BJ (cell line): ENCODE measurements at regions of chr16 and their contacts with region 1.

Region 1: DNA sequence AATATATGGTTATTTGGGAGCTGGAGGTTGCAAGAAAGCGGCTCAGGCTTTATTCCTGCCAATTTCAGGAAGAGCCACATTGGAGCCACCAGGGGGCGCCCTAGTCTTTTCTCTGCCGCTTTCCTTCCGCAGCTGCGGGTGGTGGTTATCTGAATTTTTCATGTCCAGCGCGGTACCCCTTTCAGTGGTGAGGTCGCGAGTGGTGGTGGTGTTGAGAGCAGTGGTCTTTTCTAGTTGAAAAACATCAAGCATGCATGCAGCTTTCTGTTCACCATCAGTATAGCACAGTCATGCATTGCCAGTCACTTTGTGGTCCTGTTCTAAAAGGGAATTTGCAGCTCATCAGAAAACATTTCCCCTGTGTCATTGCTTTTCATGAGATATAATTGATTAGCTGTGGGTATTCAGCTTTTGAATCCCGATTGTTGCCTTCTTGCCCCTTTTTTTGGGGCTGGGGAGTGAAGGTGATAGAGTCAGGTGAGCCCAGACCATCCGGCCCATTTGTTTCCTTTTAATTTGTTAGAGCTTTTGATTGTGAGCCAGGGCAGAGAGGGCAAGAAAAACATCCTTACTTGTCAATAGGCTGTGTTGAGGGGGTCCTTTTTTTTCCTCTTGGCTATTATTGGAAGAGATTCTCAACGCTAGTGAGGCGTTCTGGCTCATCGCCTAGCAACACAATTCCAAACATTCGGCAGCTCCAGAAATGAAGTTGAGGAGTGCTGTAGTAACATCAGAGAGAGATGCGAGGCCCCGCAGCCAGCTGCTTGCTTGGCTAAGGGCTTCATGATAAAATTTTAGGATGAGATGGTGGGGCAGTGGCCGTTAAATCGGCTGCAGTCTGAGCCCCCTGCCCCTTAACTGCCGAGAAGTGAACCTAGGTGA is 119.0 kb downstream of the SNX29 start:
- DNase-seq: no peak
- H3K4me3 ChIP-seq: no peak overlapping the region
- H3K27me3 ChIP-seq: no peaks in the 10 kb centered on the region
- CTCF ChIP-seq: peak; percentile 87

Region 2: DNA sequence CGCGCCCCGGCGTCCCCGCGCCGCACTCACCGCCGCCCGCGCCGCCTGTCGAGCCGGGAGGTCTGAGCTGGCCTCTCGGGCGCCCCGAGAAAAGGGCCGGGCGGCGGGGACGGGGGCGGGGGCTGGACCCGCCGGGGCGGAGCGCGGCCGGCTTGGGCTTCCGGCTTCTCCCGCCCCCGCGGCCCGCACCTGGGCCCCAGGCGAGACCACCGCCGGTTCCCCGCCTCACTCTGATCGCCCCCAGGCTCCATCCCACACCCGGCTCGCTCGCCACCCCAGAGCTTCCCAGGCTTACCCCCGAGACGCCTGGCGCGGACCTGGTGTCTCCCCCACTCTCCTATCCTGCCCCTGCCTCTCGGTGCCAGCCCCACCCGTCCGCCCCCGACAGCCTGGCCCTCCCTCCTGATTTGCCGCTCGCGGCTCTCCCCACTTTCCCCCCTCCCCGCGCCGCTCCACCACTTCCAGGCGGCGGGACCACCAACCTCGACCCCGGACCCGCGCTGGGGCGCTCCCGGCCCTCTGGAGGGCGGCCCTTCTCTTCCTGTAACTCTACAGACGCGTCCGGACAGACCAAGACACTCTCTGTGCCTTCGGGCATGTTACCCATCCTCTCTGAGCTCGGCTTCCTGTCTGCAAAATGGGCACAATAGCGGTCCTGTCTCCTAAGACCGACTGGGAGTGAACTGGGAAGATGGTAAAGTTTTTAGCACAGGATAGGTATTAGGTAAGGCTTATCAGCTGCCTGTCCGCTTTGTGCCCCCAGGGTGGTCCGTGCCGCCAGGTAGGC is 508.5 kb before region 1 on chr16 and contains the start of gene LITAF:
- CTCF ChIA-PET with region 1: no interaction called
- POLR2A ChIA-PET with region 1: no interaction called
- DNase-seq: no peak
- H3K4me3 ChIP-seq: peak within 1 kb of the TSS; percentile 84
- H3K27me3 ChIP-seq: no peaks in the 10 kb centered on the region
- CTCF ChIP-seq: no peak; the same call in 1 of the 2 replicates
- polyA plus RNA-seq, gene LITAF: 118 and 212 TPM in 2 replicates

Region 3: DNA sequence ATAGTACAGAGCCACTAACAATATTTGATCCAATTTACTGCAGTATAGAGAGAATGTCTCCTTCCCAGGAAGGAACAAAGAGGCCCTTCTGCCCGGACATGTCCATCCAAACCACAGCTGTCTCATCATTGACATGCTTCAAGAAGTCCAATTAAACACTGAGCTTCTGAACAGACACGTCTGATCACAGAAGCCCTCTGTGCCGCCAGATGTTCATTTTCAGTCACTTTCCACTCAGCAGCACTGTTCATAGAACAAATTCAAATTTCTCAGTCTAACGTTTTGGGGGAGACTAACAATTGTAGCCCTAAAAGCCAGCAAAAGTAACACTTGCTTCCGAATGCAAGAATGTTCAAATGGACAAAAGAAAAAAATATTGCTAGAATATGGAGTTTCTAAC is 313.7 kb before region 1 on chr16:
- CTCF ChIA-PET with region 1: no interaction called
- POLR2A ChIA-PET with region 1: no interaction called
- DNase-seq: no peak
- H3K4me3 ChIP-seq: no peak overlapping the region
- H3K27me3 ChIP-seq: no peaks in the 10 kb centered on the region
- CTCF ChIP-seq: no peak

Region 4: GRCh38 chr16:12057266-12057665 is 38.2 kb before region 1 on chr16:
- CTCF ChIA-PET with region 1: no interaction called
- POLR2A ChIA-PET with region 1: no interaction called
- DNase-seq: peak; percentile 52
- H3K4me3 ChIP-seq: no peak overlapping the region
- H3K27me3 ChIP-seq: no peaks in the 10 kb centered on the region
- CTCF ChIP-seq: peak; percentile 54

Region 5: DNA sequence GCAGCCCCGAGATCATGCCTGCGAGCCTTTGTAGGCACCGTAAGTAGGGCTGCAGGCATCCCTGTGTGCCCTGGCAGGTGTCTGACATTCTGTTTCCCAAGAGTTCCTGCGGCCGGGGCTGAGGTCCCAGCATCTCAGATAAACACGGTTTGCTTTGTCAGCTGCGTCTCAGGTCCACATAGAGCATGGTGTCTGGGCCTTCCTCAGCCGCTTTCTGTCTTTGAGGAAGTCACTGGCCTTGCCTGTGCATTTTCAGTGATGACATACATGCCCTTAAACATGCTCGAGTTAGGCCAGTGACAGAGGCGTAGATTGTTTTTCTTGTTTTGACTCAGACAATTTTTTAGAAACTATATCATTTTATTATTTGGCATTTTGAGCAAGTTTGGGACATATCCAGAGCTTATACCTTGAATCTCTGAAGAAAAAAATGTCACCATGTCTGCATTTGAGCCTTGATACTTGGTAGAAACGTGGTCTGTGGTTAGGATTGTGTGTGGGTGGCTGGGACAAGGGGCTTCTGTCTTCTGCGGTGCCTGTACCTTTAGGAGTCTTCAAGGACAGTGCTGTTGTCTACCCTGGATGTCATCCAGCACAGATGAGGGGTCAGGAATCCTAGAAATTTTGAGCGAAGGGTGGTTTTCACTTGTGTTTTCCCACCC is 13.2 kb before region 1 on chr16:
- CTCF ChIA-PET with region 1: interaction called, 18 read pairs
- POLR2A ChIA-PET with region 1: no interaction called
- DNase-seq: no peak
- H3K4me3 ChIP-seq: no peak overlapping the region
- H3K27me3 ChIP-seq: no peaks in the 10 kb centered on the region
- CTCF ChIP-seq: no peak

Region 6: GRCh38 chr16:12217341-12217740 is 121.8 kb after region 1 on chr16:
- CTCF ChIA-PET with region 1: interaction called, 10 read pairs
- POLR2A ChIA-PET with region 1: no interaction called
- DNase-seq: no peak
- H3K4me3 ChIP-seq: no peak overlapping the region
- H3K27me3 ChIP-seq: no peaks in the 10 kb centered on the region
- CTCF ChIP-seq: no peak

Region 7: DNA sequence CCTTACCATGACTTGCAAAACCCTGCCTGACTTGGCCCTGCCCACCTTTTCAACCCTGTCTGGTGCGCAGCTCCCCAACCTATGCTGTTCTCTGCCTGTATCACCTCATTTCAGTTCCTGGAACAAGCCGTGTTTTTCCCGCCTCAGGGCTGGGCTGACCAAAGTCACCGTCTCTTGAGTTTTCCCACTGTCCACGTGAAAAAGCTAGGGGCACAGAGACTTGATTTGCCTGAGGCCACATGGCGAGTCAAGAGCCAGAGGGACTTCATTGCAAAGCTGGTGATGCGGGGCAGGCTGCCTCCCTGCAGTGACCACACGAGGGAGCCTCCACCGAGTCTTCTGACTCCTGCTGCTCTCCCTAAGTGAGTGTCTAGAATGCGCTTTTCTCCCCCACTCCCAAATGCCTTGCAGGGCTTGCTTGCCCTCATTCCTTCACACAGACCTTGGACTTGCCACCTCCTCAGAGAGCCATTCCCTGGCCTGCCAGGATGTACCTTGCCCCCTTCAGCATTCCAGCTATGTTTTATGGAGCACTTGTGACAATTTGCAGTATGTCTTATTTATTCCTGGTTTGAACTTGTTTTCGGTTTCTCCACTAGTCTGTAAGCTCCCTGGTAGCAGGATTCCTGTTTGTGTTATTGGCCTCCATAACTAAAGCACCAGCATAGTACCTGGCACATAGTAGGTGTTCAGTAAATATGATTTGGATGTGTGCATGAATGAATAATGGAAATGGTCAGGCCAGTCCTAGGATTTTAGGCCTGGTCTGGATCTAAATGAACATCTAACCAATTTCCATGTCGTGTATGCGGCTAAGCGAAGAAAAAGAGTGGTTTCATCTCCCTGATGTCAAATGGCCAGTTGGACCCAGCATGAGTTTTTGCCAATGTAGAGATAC is 133.3 kb after region 1 on chr16:
- CTCF ChIA-PET with region 1: interaction called, 61 read pairs
- POLR2A ChIA-PET with region 1: no interaction called
- DNase-seq: peak; percentile 60
- H3K4me3 ChIP-seq: no peak overlapping the region
- H3K27me3 ChIP-seq: no peaks in the 10 kb centered on the region
- CTCF ChIP-seq: peak; percentile 90

Region 8: GRCh38 chr16:12276556-12276955 is 181.0 kb after region 1 on chr16:
- CTCF ChIA-PET with region 1: interaction called, 11 read pairs
- POLR2A ChIA-PET with region 1: no interaction called
- DNase-seq: no peak
- H3K4me3 ChIP-seq: no peak overlapping the region
- H3K27me3 ChIP-seq: no peaks in the 10 kb centered on the region
- CTCF ChIP-seq: no peak

Region 9: DNA sequence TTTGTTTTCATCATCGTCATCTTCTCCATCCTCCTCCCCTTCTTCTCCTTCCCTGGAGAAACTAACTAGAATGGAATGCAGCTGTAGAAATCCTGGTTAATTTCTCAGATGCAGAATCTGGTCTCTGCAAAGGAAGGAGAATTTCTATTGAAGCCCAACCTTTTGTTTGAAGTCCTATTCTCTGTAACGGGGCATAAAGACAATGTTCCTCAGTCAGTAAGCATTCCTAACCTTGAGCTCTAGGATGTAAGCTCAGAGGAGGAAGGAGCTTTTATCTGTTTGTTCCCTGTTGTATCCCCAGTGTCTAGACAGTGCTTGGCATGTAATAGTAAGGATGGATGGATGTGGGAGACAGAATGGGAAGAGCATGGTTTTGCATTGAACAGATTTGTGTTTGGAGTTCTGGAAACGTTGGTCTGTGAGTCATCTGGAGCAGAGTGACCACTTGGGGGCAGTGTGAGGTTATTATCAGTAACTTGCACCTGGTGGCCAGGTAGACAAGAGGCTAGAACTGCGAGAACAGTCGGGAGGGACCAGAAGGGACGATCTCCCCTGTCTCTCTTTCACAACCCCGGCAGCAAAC is 244.7 kb after region 1 on chr16:
- CTCF ChIA-PET with region 1: interaction called, 29 read pairs
- POLR2A ChIA-PET with region 1: no interaction called
- DNase-seq: peak; percentile 39
- H3K4me3 ChIP-seq: no peak overlapping the region
- H3K27me3 ChIP-seq: no peaks in the 10 kb centered on the region
- CTCF ChIP-seq: peak; percentile 29; the same call in 1 of the 2 replicates

Region 10: GRCh38 chr16:12819126-12820117 is 723.9 kb after region 1 on chr16:
- CTCF ChIA-PET with region 1: interaction called, 17 read pairs
- POLR2A ChIA-PET with region 1: no interaction called
- DNase-seq: no peak
- H3K4me3 ChIP-seq: no peak overlapping the region
- H3K27me3 ChIP-seq: no peaks in the 10 kb centered on the region
- CTCF ChIP-seq: peak; percentile 89